H1 (cell line): ENCODE measurements at regions of chr11 and their contacts with region 1.

Region 1: GRCh38 chr11:61899146-61899841 is 7.9 kb upstream of the FADS3 start:
- DNase-seq: peak; percentile 78 to 100
- H3K4me3 ChIP-seq: no peak overlapping the region
- H3K27ac ChIP-seq: no peak overlapping the region
- H3K4me1 ChIP-seq: peaks cover 0 to 18% (median 4%) of the 10 kb centered on the region in 4 experiments; a peak in 6 of 7 replicates
- H3K27me3 ChIP-seq: no peaks in the 10 kb centered on the region
- CTCF ChIP-seq: peak in 2 of 3 experiments; percentile 99 to 100; a peak in 3 of 4 replicates
- EP300 ChIP-seq: no peak
- POLR2A ChIP-seq: no peak
- RAD21 ChIP-seq: peak; percentile 92 to 95

Region 2: GRCh38 chr11:61871158-61871597 is 28.1 kb before region 1 on chr11:
- CTCF ChIA-PET with region 1: interaction called, 172 read pairs
- POLR2A ChIA-PET with region 1: interaction called, 4 read pairs
- DNase-seq: peak; percentile 73 to 94
- H3K4me3 ChIP-seq: peak overlapping the region in 2 of 4 experiments; percentile 22 to 30; a peak in 5 of 8 replicates
- H3K27ac ChIP-seq: no peak overlapping the region
- H3K4me1 ChIP-seq: peaks cover 4 to 14% (median 4%) of the 10 kb centered on the region in 4 experiments; a peak in 6 of 7 replicates
- H3K27me3 ChIP-seq: peaks cover 0 to 11% (median 8%) of the 10 kb centered on the region in 4 experiments; a peak in 5 of 7 replicates
- CTCF ChIP-seq: peak in 2 of 3 experiments; percentile 94 to 97; a peak in 3 of 4 replicates
- EP300 ChIP-seq: 0 out of 3 replicates have a peak, but pooled peaks of 1 of the 2 experiments have one; percentile 27
- POLR2A ChIP-seq: no peak
- RAD21 ChIP-seq: peak; percentile 97 to 98

Region 3: DNA sequence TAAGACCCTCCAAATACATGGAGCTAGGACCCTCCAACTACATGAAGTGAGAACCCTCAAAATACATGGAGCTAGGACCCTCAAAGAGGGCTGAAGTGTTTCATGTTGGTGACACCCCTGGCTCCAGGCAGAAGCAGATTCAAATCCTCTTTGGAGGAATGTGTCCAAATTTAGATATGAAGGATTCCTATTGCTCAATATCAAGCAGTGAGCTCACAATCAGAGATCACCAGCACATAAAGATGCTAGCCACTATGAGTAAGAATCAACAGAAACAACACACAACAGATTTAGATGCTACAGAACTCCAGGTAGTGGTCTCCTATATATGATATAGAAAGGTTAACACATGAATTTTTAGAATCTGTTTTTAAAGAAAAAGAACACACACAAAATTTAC is 29.3 kb after region 1 on chr11:
- CTCF ChIA-PET with region 1: interaction called, 225 read pairs
- POLR2A ChIA-PET with region 1: interaction called, 9 read pairs
- DNase-seq: no peak
- H3K4me3 ChIP-seq: no peak overlapping the region
- H3K27ac ChIP-seq: no peak overlapping the region
- H3K4me1 ChIP-seq: peaks cover 0 to 10% (median 7%) of the 10 kb centered on the region in 4 experiments; a peak in 6 of 7 replicates
- H3K27me3 ChIP-seq: no peaks in the 10 kb centered on the region
- CTCF ChIP-seq: no peak
- EP300 ChIP-seq: no peak
- POLR2A ChIP-seq: no peak
- RAD21 ChIP-seq: no peak

Region 4: GRCh38 chr11:61961570-61962212 is 62.4 kb after region 1 on chr11:
- CTCF ChIA-PET with region 1: interaction called, 36 read pairs
- POLR2A ChIA-PET with region 1: interaction called, 8 read pairs
- DNase-seq: no peak
- H3K4me3 ChIP-seq: no peak overlapping the region
- H3K27ac ChIP-seq: no peak overlapping the region
- H3K4me1 ChIP-seq: no peaks in the 10 kb centered on the region
- H3K27me3 ChIP-seq: peaks cover 0 to 1% (median 0%) of the 10 kb centered on the region in 4 experiments; a peak in 2 of 7 replicates
- CTCF ChIP-seq: no peak
- EP300 ChIP-seq: no peak
- POLR2A ChIP-seq: no peak
- RAD21 ChIP-seq: no peak

Region 5: DNA sequence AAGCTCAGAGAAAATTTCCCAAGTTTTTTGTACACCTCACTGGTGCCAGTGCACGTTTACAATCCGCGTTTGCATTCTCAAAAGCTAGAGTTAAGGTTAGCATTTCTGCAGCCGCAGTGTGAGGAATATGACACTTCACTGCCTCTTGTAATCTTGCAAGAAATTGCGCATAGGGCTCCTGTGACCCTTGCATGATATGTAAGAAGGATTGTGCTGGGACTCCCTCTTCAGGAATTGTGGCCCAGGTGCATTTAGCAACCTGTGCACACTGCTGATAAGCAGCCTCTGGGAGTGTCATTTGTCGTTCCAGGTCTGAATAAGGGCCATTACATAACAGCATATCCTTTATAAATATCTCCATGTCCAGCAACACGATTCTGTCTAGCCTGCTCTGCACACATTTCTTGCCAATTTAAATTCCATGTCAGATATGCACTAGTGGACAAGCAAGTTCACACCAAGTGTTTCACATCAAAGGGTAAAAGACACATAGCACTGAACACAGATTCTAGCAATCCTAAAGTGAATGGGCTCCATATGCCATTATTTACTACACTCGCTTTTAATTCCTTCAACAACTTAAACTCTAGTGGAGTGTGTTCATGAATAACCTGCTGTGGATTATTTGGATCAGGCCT is 155.3 kb after region 1 on chr11:
- CTCF ChIA-PET with region 1: interaction called, 16 read pairs
- POLR2A ChIA-PET with region 1: no interaction called
- DNase-seq: no peak
- H3K4me3 ChIP-seq: no peak overlapping the region
- H3K27ac ChIP-seq: no peak overlapping the region
- H3K4me1 ChIP-seq: no peaks in the 10 kb centered on the region
- H3K27me3 ChIP-seq: no peaks in the 10 kb centered on the region
- CTCF ChIP-seq: peak; percentile 29 to 59 (median 57)
- EP300 ChIP-seq: no peak
- POLR2A ChIP-seq: no peak
- RAD21 ChIP-seq: peak; percentile 65 to 78

Region 6: GRCh38 chr11:62108017-62108750 is 208.9 kb after region 1 on chr11:
- CTCF ChIA-PET with region 1: interaction called, 132 read pairs
- POLR2A ChIA-PET with region 1: interaction called, 3 read pairs
- DNase-seq: peak in 1 of 2 experiments; percentile 19
- H3K4me3 ChIP-seq: no peak overlapping the region
- H3K27ac ChIP-seq: no peak overlapping the region
- H3K4me1 ChIP-seq: no peaks in the 10 kb centered on the region; a peak in 1 of 7 replicates
- H3K27me3 ChIP-seq: no peaks in the 10 kb centered on the region
- CTCF ChIP-seq: peak in 2 of 3 experiments; percentile 77 to 83; a peak in 3 of 4 replicates
- EP300 ChIP-seq: no peak
- POLR2A ChIP-seq: no peak
- RAD21 ChIP-seq: peak; percentile 93 to 94